ENCODE measurements at regions of chrX and their contacts with region 1.

Region 1: GRCh38 chrX:8743126-8743732 is 11.3 kb upstream of the ANOS1 start:
- DNase-seq: peak; percentile 56 to 71
- ATAC-seq: peak in 2 of 4 donors; percentile 58 to 75
- H3K4me3 ChIP-seq: no peak overlapping the region
- H3K27ac ChIP-seq: no peak overlapping the region
- H3K4me1 ChIP-seq: no peaks in the 10 kb centered on the region
- H3K27me3 ChIP-seq: no peaks in the 10 kb centered on the region
- CTCF ChIP-seq: peak; percentile 73

Region 2: DNA sequence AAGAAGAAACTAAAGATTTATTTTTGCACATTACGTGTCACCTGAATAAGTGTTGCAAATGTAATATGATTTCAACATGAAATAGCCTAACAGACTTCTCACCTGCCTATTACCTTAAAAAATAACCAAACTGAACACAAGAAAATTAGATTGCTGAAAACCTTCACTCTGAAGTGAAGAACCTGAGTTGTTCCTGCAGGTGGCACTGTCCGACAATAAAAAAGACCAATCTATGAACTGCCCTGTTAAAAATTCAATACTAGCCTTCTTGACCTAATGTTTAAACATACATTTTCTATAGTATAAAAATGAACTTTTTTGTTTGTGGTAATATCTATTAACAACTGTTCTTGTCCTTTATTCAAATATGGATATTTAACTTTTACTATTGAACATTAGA is 746.8 kb before region 1 on chrX:
- intact Hi-C with region 1: loop called (anchors 5 kb)
- DNase-seq: no peak
- ATAC-seq: peak in 1 of 4 donors; percentile 66
- H3K4me3 ChIP-seq: no peak overlapping the region
- H3K27ac ChIP-seq: no peak overlapping the region
- H3K4me1 ChIP-seq: no peaks in the 10 kb centered on the region
- H3K27me3 ChIP-seq: no peaks in the 10 kb centered on the region
- CTCF ChIP-seq: peak; percentile 70

Region 3: GRCh38 chrX:8364369-8365141 is 378.7 kb before region 1 on chrX:
- intact Hi-C with region 1: loop called in 1 of 2 experiments (anchors 5 kb)
- DNase-seq: no peak
- ATAC-seq: peak; percentile 42 to 78 (median 68)
- H3K4me3 ChIP-seq: no peak overlapping the region
- H3K27ac ChIP-seq: no peak overlapping the region
- H3K4me1 ChIP-seq: no peaks in the 10 kb centered on the region
- H3K27me3 ChIP-seq: no peaks in the 10 kb centered on the region
- CTCF ChIP-seq: peak; percentile 42

Region 4: DNA sequence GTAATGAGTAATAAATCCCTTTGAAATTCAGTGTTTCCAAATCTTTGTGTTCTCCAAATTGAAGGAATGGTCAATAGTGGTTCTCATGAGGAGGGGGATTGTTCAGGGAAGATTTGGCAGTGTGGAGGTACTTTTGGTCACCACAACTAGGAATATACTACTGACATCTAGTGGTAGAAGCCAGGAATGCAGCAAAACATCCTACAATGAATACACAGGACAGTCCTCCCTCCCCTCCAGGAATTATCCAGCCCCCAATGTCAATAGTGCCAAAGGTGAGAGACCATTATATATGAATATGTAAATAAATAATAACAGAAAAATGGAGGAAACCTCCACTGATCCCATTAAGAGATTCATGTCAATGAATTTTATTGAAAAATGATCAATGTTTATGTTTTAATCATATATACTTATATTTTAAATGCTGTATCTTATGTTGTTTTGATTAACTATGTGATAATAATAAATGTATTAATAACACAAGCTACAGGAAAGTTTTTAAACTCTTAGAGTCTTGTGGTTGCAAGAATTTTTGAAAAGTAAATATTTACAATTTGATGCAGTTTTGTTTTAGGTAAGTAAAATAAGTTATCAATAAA is 72.3 kb after region 1 on chrX:
- intact Hi-C with region 1: loop called (anchors 2 to 10 kb)
- DNase-seq: no peak
- ATAC-seq: no peak
- H3K4me3 ChIP-seq: no peak overlapping the region
- H3K27ac ChIP-seq: no peak overlapping the region
- H3K4me1 ChIP-seq: no peaks in the 10 kb centered on the region
- H3K27me3 ChIP-seq: peaks cover 0 to 7% (median 0%) of the 10 kb centered on the region in 3 donors
- CTCF ChIP-seq: peak; percentile 78

Measured in psoas muscle (tissue), 8 donors.